Endothelial cell of umbilical vein (primary cell): ENCODE measurements at regions of chr2 and their contacts with region 1.

Region 1: DNA sequence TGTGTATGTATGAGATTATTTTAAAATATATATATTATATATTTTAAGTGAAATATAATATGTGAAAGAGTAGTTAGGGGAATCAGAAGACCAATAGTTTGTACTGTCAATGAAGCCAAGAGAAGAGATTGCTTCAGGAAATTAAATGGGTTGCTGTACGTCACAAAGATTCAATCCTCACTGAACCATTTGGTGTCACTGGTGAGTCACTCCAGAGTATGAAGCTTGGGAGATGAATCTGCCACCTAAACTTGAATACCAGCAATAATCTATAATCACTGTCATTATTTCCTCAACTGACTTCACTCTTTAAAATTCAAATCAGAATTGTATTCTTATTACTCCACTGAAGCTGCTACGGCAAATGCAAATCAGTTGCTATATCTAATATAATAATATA is 41.9 kb upstream of the SCN9A start:
- DNase-seq: peak; percentile 42
- H3K4me3 ChIP-seq: no peak overlapping the region
- H3K27ac ChIP-seq: no peak overlapping the region
- H3K4me1 ChIP-seq: peaks cover 5% of the 10 kb centered on the region
- H3K27me3 ChIP-seq: no peaks in the 10 kb centered on the region
- CTCF ChIP-seq: peak in 1 of 2 donors; percentile 9
- POLR2A ChIP-seq: no peak

Region 2: DNA sequence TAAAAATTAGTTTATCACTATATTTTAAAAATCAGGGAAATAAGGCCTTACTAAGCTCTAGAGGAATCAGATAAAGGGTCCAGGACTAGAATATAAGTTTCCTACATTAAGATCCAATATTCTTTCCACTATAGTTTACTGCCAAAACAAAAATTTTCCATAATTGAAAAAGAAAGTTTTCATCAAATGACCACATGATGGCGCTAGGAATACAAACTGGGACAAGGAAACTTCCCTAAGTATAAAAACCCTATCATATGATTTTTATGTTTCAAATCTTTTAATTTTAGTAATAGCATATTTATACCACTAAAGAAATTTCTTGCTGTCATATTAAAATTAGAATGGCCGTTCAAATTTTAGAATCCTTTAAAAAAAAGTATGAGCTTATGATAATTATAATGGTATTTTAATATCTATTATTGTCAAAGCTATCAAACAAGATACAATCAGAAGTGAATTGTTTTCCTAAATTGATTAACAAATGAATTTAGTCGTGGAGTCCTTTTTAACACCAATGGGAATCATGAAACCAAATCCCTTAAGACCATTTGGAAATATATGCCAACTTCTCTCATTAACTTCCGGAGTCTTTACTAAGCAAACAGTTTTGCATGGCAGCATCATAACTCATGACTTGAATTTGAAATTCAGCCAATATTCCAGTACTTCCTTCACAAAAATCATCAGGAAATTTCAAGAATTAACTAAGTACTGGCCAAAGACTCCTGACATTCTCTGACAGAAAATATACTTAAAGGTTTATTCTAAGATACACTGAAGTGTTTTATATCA is 360.1 kb before region 1 on chr2:
- CTCF ChIA-PET with region 1: interaction called, 6 read pairs
- POLR2A ChIA-PET with region 1: no interaction called
- dilution Hi-C with region 1: no loop called
- intact Hi-C with region 1: loop called (anchors 2 kb)
- DNase-seq: peak; percentile 85
- H3K4me3 ChIP-seq: peak overlapping the region in 1 of 3 experiments; percentile 32
- H3K27ac ChIP-seq: peak overlapping the region; percentile 51
- H3K4me1 ChIP-seq: peaks cover 18% of the 10 kb centered on the region
- H3K27me3 ChIP-seq: no peaks in the 10 kb centered on the region
- CTCF ChIP-seq: peak; percentile 10 to 25
- POLR2A ChIP-seq: no peak

Region 3: DNA sequence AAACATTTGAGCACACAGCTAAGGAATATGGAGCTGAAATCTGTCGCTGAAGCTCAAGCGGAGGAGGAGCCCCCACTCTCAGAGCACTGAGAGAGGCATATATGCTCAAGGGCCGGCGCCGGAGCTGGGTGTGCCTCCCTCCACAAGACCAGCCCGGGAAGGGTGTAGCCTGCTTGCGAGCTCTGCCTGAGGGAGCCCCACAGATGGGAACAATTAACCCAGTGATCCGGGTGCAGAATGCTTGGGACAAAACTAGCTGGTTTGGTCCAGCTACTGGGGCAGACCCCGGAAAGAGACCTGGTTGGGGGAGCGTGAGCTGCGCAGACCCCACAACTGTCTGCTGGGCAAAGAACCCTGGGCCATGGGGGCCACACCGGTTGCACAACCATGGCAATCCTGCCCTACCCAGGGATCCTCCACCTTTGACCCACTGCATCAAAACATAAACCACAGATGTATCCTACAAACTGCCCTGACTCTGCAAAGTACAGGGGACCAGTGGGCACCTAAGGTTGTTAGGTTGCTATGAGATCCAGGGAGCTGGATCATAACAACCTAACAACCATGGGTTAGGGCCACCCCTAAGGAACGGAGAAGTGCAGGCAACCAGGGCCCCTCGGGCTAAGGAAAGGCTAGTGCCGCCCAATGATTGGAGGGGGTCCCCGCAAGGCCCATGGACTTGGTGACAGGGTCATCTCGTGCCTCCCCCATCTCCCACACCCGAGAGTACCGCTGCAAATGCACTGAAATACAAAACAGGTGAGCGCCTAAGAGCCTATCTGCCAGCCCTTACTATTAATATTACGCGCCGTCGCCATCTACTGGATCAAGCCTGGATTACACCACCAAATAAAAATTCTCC is 236.5 kb before region 1 on chr2:
- CTCF ChIA-PET with region 1: interaction called, 124 read pairs
- POLR2A ChIA-PET with region 1: no interaction called
- dilution Hi-C with region 1: no loop called
- intact Hi-C with region 1: loop called (anchors 1 kb)
- DNase-seq: peak; percentile 65
- H3K4me3 ChIP-seq: no peak overlapping the region
- H3K27ac ChIP-seq: no peak overlapping the region
- H3K4me1 ChIP-seq: no peaks in the 10 kb centered on the region
- H3K27me3 ChIP-seq: peaks cover 0 to 1% of the 10 kb centered on the region in 2 experiments
- CTCF ChIP-seq: peak; percentile 42 to 57
- POLR2A ChIP-seq: no peak

Region 4: GRCh38 chr2:166375736-166376487 is 41.8 kb before region 1 on chr2 and contains the start of gene SCN9A:
- CTCF ChIA-PET with region 1: interaction called, 20 read pairs
- POLR2A ChIA-PET with region 1: no interaction called
- dilution Hi-C with region 1: no loop called
- intact Hi-C with region 1: loop called (anchors 5 kb)
- DNase-seq: peak; percentile 59
- H3K4me3 ChIP-seq: peak within 1 kb of the TSS; percentile 48 to 67 (median 58)
- H3K27ac ChIP-seq: no peak within 1 kb of the TSS
- H3K4me1 ChIP-seq: peaks cover 10% of the 10 kb centered on the region
- H3K27me3 ChIP-seq: peaks cover 6 to 19% of the 10 kb centered on the region in 2 experiments
- CTCF ChIP-seq: no peak
- POLR2A ChIP-seq: no peak
- total RNA-seq, gene SCN9A: 1.6 and 1.8 TPM in 2 replicates

Region 5: GRCh38 chr2:166516712-166517303 is 99.1 kb after region 1 on chr2:
- CTCF ChIA-PET with region 1: interaction called, 14 read pairs
- POLR2A ChIA-PET with region 1: no interaction called
- dilution Hi-C with region 1: no loop called
- intact Hi-C with region 1: loop called (anchors 2 kb)
- DNase-seq: peak; percentile 61
- H3K4me3 ChIP-seq: no peak overlapping the region
- H3K27ac ChIP-seq: no peak overlapping the region
- H3K4me1 ChIP-seq: no peaks in the 10 kb centered on the region
- H3K27me3 ChIP-seq: no peaks in the 10 kb centered on the region
- CTCF ChIP-seq: peak; percentile 34 to 59
- POLR2A ChIP-seq: no peak